ENCODE measurements at regions of chr9 and their contacts with region 1.

Region 1: DNA sequence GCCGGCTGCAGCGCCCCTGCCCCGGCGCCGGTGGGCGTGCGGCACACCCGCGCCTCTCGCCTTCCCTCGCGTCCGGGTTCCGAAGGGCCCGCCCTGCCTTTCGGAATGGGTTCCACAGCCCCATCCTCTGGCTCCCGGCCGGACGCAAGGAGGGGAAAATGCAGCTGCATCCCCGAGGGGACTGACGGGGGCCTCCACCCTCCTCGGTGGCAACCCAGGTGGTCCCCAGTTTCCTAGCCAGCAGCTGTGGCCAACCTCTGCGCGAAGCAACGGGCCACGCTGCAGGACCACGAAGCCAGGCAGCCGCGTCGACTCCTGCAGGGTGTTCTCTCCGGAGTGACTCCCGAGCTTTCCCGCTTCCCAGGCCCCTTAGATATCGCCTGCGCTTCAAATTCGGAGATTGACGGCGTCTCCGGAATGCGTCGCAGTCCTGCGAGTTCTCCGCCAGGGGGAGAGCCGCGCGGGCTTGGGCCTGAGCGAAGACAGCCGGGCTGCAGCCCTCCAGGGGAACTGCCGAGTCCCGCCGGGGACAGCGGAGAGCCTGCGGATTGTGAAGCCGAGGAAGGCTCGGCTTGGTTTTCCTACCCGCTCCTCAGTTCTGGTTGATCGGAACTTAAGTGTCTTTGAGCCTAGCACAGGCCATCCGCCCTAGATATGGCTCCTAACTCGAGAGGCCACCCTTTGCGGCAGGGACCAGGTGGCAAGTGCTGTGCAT is 582 bp upstream of the APBA1 start:
- DNase-seq: peak; percentile 74
- H3K4me3 ChIP-seq: peak overlapping the region; percentile 74 to 78
- H3K27ac ChIP-seq: peak overlapping the region; percentile 65 to 80
- H3K4me1 ChIP-seq: peaks cover 4% of the 10 kb centered on the region
- H3K27me3 ChIP-seq: no peaks in the 10 kb centered on the region
- CTCF ChIP-seq: peak; percentile 41 to 87 (median 72)
- POLR2A ChIP-seq: no peak

Region 2: GRCh38 chr9:69740872-69741505 is 68.2 kb after region 1 on chr9:
- intact Hi-C with region 1: no loop called
- DNase-seq: no peak
- H3K4me3 ChIP-seq: no peak overlapping the region
- H3K27ac ChIP-seq: no peak overlapping the region
- H3K4me1 ChIP-seq: no peaks in the 10 kb centered on the region
- H3K27me3 ChIP-seq: no peaks in the 10 kb centered on the region
- CTCF ChIP-seq: no peak
- POLR2A ChIP-seq: no peak

Region 3: DNA sequence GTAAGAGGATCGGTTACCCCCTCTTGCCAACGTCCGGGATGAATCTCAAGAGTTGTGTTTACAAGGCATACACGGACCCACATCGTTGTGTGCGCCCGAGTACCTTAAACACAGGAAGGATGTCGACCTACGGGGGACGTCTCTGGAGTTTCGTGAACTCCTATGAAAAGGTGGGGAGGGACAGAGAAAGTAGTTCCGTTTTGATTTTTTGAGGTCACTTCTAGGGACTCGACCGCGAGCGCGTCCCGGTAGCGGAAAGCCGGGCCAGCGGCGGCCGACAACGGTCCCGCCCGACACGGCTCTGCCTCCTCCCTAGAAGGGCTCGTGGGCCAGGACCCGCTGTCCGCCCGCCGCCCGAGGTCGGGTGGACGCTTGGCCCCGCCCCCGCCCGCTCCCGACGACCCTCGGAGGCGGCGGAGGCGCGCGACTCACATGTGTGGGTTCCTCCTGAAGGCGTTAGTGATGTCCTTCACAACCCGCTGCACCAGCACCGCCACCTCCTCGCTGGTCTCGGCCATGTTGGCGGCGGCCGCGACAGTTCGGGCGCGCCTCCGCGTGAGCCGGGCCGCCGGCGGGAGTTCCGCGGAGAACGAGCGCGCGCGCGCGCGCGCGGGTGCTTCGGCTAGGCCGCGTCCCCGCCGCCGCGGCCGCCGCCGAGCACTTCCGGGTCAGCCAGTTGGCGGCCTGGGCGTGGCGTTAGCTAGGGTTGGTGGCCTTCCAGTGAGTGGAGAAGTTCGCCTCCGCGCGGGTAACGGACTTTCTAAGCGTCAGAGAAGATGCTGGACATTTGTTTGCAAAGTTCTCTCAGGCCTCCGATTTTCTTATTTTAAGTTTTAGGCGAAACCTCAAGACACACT is 86.9 kb after region 1 on chr9 and contains the start of gene PTAR1:
- intact Hi-C with region 1: loop called (anchors 10 kb)
- DNase-seq: peak; percentile 83
- H3K4me3 ChIP-seq: peak within 1 kb of the TSS; percentile 53 to 70
- H3K27ac ChIP-seq: peak within 1 kb of the TSS; percentile 90 to 93
- H3K4me1 ChIP-seq: no peaks in the 10 kb centered on the region
- H3K27me3 ChIP-seq: no peaks in the 10 kb centered on the region
- CTCF ChIP-seq: peak in 1 of 4 experiments; percentile 7
- POLR2A ChIP-seq: peak; percentile 68
- total RNA-seq, gene PTAR1: 47.6 to 54.0 TPM

Region 4: DNA sequence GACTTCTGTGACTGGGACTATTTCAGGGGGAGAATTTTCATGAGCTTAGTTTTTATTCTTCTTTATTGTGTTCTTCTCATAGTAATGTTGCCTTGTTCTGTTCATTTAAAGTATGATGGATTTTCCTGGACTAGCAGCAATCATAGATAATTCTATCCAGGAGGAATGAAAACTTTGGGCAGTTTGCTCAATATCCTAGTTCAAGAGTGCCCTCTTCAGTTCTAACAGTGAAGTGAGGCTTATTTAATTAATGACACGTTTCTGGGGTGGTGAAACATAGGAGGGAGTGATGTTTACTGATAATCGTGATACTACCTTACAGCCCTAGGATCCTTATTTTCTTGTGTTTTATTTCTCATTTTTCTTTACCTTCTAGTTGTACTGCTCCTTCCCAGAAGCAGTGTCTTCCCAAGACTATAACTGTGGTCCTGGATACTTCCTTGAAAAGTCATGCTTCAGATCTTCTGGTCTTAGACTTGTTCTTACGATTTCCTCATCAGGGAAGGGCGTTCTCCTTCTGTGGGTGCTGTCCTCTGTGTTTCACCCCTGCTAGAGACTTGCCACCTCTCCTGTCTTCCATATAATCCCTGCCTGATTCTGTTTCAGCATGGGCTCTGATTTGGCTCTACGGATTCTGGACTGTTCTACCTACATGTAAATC is 205.2 kb after region 1 on chr9:
- intact Hi-C with region 1: loop called (anchors 5 kb)
- DNase-seq: no peak
- H3K4me3 ChIP-seq: no peak overlapping the region
- H3K27ac ChIP-seq: no peak overlapping the region
- H3K4me1 ChIP-seq: no peaks in the 10 kb centered on the region
- H3K27me3 ChIP-seq: no peaks in the 10 kb centered on the region
- CTCF ChIP-seq: peak in 3 of 4 experiments; percentile 28 to 69 (median 61)
- POLR2A ChIP-seq: no peak

Region 5: DNA sequence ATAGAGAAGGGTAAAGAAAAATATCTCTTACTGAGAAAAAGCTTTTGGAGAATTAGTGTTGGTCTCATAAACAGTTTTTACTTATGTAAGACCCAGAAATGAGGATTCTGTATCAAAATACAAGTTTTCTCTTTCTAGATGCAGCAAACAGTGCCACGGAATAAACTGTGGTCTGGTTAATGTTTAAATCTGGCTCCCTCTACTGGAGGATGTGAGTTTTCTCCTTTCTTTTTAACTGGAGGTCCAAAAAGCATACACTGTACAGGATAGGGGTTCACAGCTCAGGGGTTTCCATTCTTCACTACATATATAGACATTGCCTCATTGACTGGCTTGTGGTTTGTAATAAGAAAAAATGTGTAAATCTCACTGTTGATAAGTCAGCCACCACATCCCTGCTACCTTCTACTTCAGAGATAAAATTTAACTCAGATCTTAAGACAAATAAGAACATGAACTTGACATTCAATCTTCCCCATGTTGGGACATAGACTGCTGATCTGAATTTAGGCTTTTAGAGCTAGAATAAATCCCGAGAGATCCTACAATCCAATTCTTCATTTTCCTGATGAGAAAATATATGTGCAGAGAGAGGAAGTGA is 246.8 kb after region 1 on chr9:
- intact Hi-C with region 1: loop called (anchors 5 kb)
- DNase-seq: no peak
- H3K4me3 ChIP-seq: no peak overlapping the region
- H3K27ac ChIP-seq: no peak overlapping the region
- H3K4me1 ChIP-seq: no peaks in the 10 kb centered on the region
- H3K27me3 ChIP-seq: no peaks in the 10 kb centered on the region
- CTCF ChIP-seq: peak; percentile 37 to 59 (median 50)
- POLR2A ChIP-seq: no peak

Measured in prostate gland (tissue), 2 donors.